T-cell (primary cell): ENCODE measurements at regions of chr15 and their contacts with region 1.

Region 1: GRCh38 chr15:51971375-51972133 is at the start of gene LEO1:
- DNase-seq: peak; percentile 70 to 96 (median 86)
- ATAC-seq: peak; percentile 88 to 93 (median 92)
- H3K4me3 ChIP-seq: peak within 1 kb of the TSS; percentile 95 to 100
- H3K4me3 Mint-ChIP-seq: peak within 1 kb of the TSS; percentile 96 to 99 (median 97)
- H3K27ac ChIP-seq: peak within 1 kb of the TSS; percentile 87
- H3K27ac Mint-ChIP-seq: peak within 1 kb of the TSS; percentile 95 to 97
- H3K4me1 ChIP-seq: peaks cover 10 to 24% of the 10 kb centered on the region in 2 experiments
- H3K4me1 Mint-ChIP-seq: peaks cover 18 to 28% (median 26%) of the 10 kb centered on the region in 3 donors
- H3K27me3 ChIP-seq: peaks cover 0 to 3% of the 10 kb centered on the region in 2 experiments
- H3K27me3 Mint-ChIP-seq: no peaks in the 10 kb centered on the region
- total RNA-seq, gene LEO1: 8.6 to 20.2 (median 16.7) TPM

Region 2: GRCh38 chr15:51955504-51956101 is 16.0 kb before region 1 on chr15:
- CTCF ChIA-PET with region 1: no interaction called
- POLR2A ChIA-PET with region 1: interaction called in 1 of 2 experiments, 11 read pairs
- DNase-seq: no peak
- ATAC-seq: no peak
- H3K4me3 ChIP-seq: no peak overlapping the region
- H3K4me3 Mint-ChIP-seq: no peak overlapping the region
- H3K27ac ChIP-seq: no peak overlapping the region
- H3K27ac Mint-ChIP-seq: no peak overlapping the region
- H3K4me1 ChIP-seq: no peaks in the 10 kb centered on the region
- H3K4me1 Mint-ChIP-seq: no peaks in the 10 kb centered on the region
- H3K27me3 ChIP-seq: no peaks in the 10 kb centered on the region
- H3K27me3 Mint-ChIP-seq: no peaks in the 10 kb centered on the region

Region 3: DNA sequence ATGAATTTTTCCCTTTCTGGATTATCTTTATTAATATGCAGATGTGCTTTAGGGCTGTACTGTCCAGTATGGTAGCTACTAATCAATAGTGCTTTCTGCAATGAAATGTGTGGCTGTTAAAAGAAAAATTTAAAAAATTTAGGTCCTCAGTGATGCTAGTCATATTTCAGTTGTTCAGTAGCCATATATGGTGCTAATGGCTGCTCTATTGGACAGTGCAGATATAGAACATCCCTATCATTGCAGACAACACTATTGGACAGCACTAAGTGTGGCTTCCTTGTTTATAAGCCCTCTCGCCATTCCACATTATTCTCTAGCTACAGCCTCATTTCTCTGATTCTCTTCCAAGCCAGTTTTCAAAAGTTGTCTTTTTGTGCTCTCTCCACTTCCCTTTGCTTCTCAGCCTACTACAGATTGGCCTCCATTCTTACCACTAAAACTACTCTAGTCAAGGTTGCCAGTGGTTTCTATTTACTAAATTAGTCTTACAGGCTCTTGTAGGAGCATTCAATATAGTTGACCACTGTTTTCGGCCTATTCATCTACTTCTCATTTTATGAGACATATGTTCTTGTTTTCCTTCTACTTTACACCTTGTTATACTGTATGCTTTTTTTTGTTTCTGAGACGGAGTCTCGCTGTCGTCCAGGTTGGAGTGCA is 57.0 kb after region 1 on chr15:
- CTCF ChIA-PET with region 1: no interaction called
- POLR2A ChIA-PET with region 1: no interaction called
- DNase-seq: no peak
- ATAC-seq: no peak
- H3K4me3 ChIP-seq: no peak overlapping the region
- H3K4me3 Mint-ChIP-seq: no peak overlapping the region
- H3K27ac ChIP-seq: no peak overlapping the region
- H3K27ac Mint-ChIP-seq: no peak overlapping the region
- H3K4me1 ChIP-seq: no peaks in the 10 kb centered on the region
- H3K4me1 Mint-ChIP-seq: peaks cover 25 to 43% (median 39%) of the 10 kb centered on the region in 3 donors
- H3K27me3 ChIP-seq: no peaks in the 10 kb centered on the region
- H3K27me3 Mint-ChIP-seq: no peaks in the 10 kb centered on the region

Region 4: GRCh38 chr15:52039925-52040781 is 68.6 kb after region 1 on chr15:
- CTCF ChIA-PET with region 1: interaction called, 5 to 11 read pairs
- POLR2A ChIA-PET with region 1: no interaction called
- DNase-seq: no peak
- ATAC-seq: no peak
- H3K4me3 ChIP-seq: no peak overlapping the region
- H3K4me3 Mint-ChIP-seq: peak overlapping the region in 1 of 3 donors; percentile 6
- H3K27ac ChIP-seq: peak overlapping the region; percentile 36
- H3K27ac Mint-ChIP-seq: peak overlapping the region; percentile 25 to 79
- H3K4me1 ChIP-seq: peaks cover 6 to 13% of the 10 kb centered on the region in 2 experiments
- H3K4me1 Mint-ChIP-seq: peaks cover 64 to 70% (median 70%) of the 10 kb centered on the region in 3 donors
- H3K27me3 ChIP-seq: no peaks in the 10 kb centered on the region
- H3K27me3 Mint-ChIP-seq: no peaks in the 10 kb centered on the region